ENCODE measurements at regions of chrX and their contacts with region 1.

Region 1: GRCh38 chrX:96407057-96407456 is 277.6 kb upstream of the DIAPH2 start:
- DNase-seq: peak; percentile 86
- ATAC-seq: peak; percentile 69
- H3K4me3 ChIP-seq: peak overlapping the region; percentile 61
- H3K27ac ChIP-seq: peak overlapping the region; percentile 98
- H3K4me1 ChIP-seq: peaks cover 50% of the 10 kb centered on the region
- H3K27me3 ChIP-seq: no peaks in the 10 kb centered on the region
- CTCF ChIP-seq: no peak

Region 2: GRCh38 chrX:96474029-96474740 is 67.1 kb after region 1 on chrX:
- CTCF ChIA-PET with region 1: no interaction called
- POLR2A ChIA-PET with region 1: interaction called, 3 read pairs
- intact Hi-C with region 1: loop called (anchors 1 kb)
- DNase-seq: peak; percentile 85
- ATAC-seq: peak; percentile 91
- H3K4me3 ChIP-seq: no peak overlapping the region
- H3K27ac ChIP-seq: peak overlapping the region; percentile 97
- H3K4me1 ChIP-seq: peaks cover 25% of the 10 kb centered on the region
- H3K27me3 ChIP-seq: no peaks in the 10 kb centered on the region
- CTCF ChIP-seq: no peak

Region 3: GRCh38 chrX:96538104-96538727 is 131.2 kb after region 1 on chrX:
- CTCF ChIA-PET with region 1: no interaction called
- POLR2A ChIA-PET with region 1: no interaction called
- intact Hi-C with region 1: loop called (anchors 10 kb)
- DNase-seq: peak; percentile 85
- ATAC-seq: peak; percentile 76
- H3K4me3 ChIP-seq: peak overlapping the region; percentile 58
- H3K27ac ChIP-seq: peak overlapping the region; percentile 96
- H3K4me1 ChIP-seq: peaks cover 28% of the 10 kb centered on the region
- H3K27me3 ChIP-seq: no peaks in the 10 kb centered on the region
- CTCF ChIP-seq: no peak

Region 4: GRCh38 chrX:96684339-96685209 is 277.5 kb after region 1 on chrX and contains the start of gene DIAPH2:
- CTCF ChIA-PET with region 1: no interaction called
- POLR2A ChIA-PET with region 1: no interaction called
- intact Hi-C with region 1: loop called (anchors 10 kb)
- DNase-seq: peak; percentile 86
- ATAC-seq: peak; percentile 86
- H3K4me3 ChIP-seq: peak within 1 kb of the TSS; percentile 95
- H3K27ac ChIP-seq: peak within 1 kb of the TSS; percentile 86
- H3K4me1 ChIP-seq: peaks cover 13% of the 10 kb centered on the region
- H3K27me3 ChIP-seq: no peaks in the 10 kb centered on the region
- CTCF ChIP-seq: 0 out of 2 replicates have a peak, but pooled peaks have one; percentile 8
- total RNA-seq, gene DIAPH2: 15.1 and 19.6 TPM in 2 replicates

Region 5: GRCh38 chrX:96715481-96715880 is 308.4 kb after region 1 on chrX:
- CTCF ChIA-PET with region 1: no interaction called
- POLR2A ChIA-PET with region 1: no interaction called
- intact Hi-C with region 1: loop called (anchors 10 kb)
- DNase-seq: peak; percentile 78
- ATAC-seq: peak; percentile 95
- H3K4me3 ChIP-seq: peak overlapping the region; percentile 27; the same call in 1 of the 2 replicates
- H3K27ac ChIP-seq: peak overlapping the region; percentile 62
- H3K4me1 ChIP-seq: peaks cover 27% of the 10 kb centered on the region
- H3K27me3 ChIP-seq: no peaks in the 10 kb centered on the region
- CTCF ChIP-seq: no peak